ENCODE measurements at regions of chr20 and their contacts with region 1.

Region 1: GRCh38 chr20:2101865-2102584 is 398 bp downstream of the STK35 start:
- DNase-seq: peak; percentile 84
- H3K4me3 Mint-ChIP-seq: peak overlapping the region; percentile 92
- H3K27ac Mint-ChIP-seq: peak overlapping the region; percentile 100
- H3K4me1 Mint-ChIP-seq: peaks cover 40% of the 10 kb centered on the region
- H3K27me3 Mint-ChIP-seq: peaks cover 9% of the 10 kb centered on the region

Region 2: GRCh38 chr20:543369-544152 is 1558.5 kb before region 1 on chr20 and contains the start of gene CSNK2A1:
- intact Hi-C with region 1: loop called (anchors 5 kb)
- DNase-seq: peak; percentile 94
- H3K4me3 Mint-ChIP-seq: peak within 1 kb of the TSS; percentile 91
- H3K27ac Mint-ChIP-seq: peak within 1 kb of the TSS; percentile 91
- H3K4me1 Mint-ChIP-seq: peaks cover 47% of the 10 kb centered on the region
- H3K27me3 Mint-ChIP-seq: peaks cover 3% of the 10 kb centered on the region
- total RNA-seq, gene CSNK2A1: 181 and 185 TPM in 2 replicates

Region 3: GRCh38 chr20:1466211-1467081 is 635.6 kb before region 1 on chr20 and contains the start of gene NSFL1C:
- intact Hi-C with region 1: loop called (anchors 2 kb)
- DNase-seq: peak; percentile 97
- H3K4me3 Mint-ChIP-seq: peak within 1 kb of the TSS; percentile 90
- H3K27ac Mint-ChIP-seq: peak within 1 kb of the TSS; percentile 82
- H3K4me1 Mint-ChIP-seq: peaks cover 45% of the 10 kb centered on the region
- H3K27me3 Mint-ChIP-seq: peaks cover 12% of the 10 kb centered on the region
- total RNA-seq, gene NSFL1C: 108 and 111 TPM in 2 replicates

Region 4: DNA sequence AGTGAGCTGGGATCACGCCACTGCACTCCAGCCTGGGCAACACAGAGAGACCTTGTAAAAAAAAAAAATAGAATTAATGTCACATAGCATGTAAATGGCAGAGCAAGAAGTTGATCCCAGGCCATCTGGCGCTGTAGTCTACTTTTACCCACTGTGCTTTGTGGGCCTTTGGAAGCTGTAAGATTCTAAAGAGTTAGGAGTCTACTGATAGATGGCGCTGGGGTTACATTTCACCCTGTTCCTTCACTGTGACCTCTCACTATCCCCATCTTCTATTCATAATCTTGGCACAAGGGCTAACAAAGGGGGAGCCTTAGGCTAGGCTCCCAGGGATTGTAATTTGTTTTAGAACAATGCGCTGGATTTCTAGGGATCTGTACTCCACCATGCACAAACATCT is 569.0 kb before region 1 on chr20:
- intact Hi-C with region 1: no loop called
- DNase-seq: no peak
- H3K4me3 Mint-ChIP-seq: no peak overlapping the region
- H3K27ac Mint-ChIP-seq: no peak overlapping the region
- H3K4me1 Mint-ChIP-seq: peaks cover 7% of the 10 kb centered on the region
- H3K27me3 Mint-ChIP-seq: peaks cover 6% of the 10 kb centered on the region

Region 5: GRCh38 chr20:2172305-2173175 is 70.5 kb after region 1 on chr20:
- intact Hi-C with region 1: loop called (anchors 2 kb)
- DNase-seq: peak; percentile 40
- H3K4me3 Mint-ChIP-seq: no peak overlapping the region
- H3K27ac Mint-ChIP-seq: no peak overlapping the region
- H3K4me1 Mint-ChIP-seq: peaks cover 5% of the 10 kb centered on the region
- H3K27me3 Mint-ChIP-seq: peaks cover 5% of the 10 kb centered on the region

Region 6: GRCh38 chr20:2451939-2452732 is 350.1 kb after region 1 on chr20:
- intact Hi-C with region 1: loop called (anchors 5 kb)
- DNase-seq: peak; percentile 50
- H3K4me3 Mint-ChIP-seq: no peak overlapping the region
- H3K27ac Mint-ChIP-seq: no peak overlapping the region
- H3K4me1 Mint-ChIP-seq: peaks cover 30% of the 10 kb centered on the region
- H3K27me3 Mint-ChIP-seq: peaks cover 2% of the 10 kb centered on the region

Region 7: GRCh38 chr20:2523919-2524708 is 422.1 kb after region 1 on chr20:
- intact Hi-C with region 1: loop called (anchors 1 kb)
- DNase-seq: peak; percentile 87
- H3K4me3 Mint-ChIP-seq: peak overlapping the region; percentile 85
- H3K27ac Mint-ChIP-seq: peak overlapping the region; percentile 87
- H3K4me1 Mint-ChIP-seq: peaks cover 26% of the 10 kb centered on the region
- H3K27me3 Mint-ChIP-seq: peaks cover 7% of the 10 kb centered on the region